Activated CD4-positive, alpha-beta T cell treated with anti-CD3 and anti-CD28 coated beads, Interleukin-2, amount 10 ng/mL, durations not matched to agents 7 days and 5 days (primary cell): ENCODE measurements at regions of chr6 and their contacts with region 1.

Region 1: GRCh38 chr6:109455502-109456282 is at the start of gene MICAL1:
- DNase-seq: peak; percentile 79
- H3K4me3 Mint-ChIP-seq: peak within 1 kb of the TSS; percentile 89
- H3K27ac Mint-ChIP-seq: peak within 1 kb of the TSS; percentile 95
- H3K4me1 Mint-ChIP-seq: peaks cover 71% of the 10 kb centered on the region
- H3K27me3 Mint-ChIP-seq: no peaks in the 10 kb centered on the region
- total RNA-seq, gene MICAL1: 93.1 to 98.3 TPM

Region 2: DNA sequence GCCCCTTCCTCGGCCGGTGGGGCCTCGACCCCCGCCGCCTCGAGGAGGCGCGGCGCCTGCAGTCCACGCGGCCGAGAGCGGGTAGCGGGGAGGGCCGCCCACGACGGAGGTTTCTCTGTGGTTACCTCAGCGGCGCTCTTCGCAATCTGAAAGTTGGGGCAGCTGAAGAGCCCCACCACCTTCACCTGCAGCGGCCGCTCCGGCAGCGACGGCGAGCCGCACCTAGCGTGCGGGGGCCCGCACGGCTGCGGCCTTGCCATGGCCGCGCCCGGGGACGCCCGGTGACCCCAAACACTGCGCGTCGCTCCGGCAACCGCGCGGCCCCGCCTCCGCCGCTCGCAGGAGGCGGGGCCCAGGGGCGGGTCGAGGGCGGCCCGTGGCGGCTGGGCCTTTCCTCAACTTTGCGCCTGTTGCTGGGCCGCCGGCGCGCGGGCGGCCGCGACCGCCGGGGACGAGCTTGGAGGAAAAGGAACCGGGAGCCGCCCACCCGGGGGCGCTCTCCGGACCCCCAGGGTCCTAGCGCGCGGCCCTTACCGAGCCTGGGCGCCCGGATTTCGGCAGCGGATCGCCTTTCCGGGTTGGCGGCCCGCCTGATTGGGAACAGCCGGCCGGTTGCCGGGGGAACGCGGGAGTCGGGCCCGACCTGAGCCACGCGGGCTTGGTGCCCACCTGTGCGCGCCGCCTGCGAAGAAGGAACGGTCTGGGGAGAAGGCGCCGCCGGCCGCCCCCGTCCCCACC is 15.2 kb before region 1 on chr6 and contains the starts of genes PPIL6 and SMPD2:
- CTCF ChIA-PET with region 1: interaction called, 81 read pairs
- POLR2A ChIA-PET with region 1: interaction called, 9 read pairs
- DNase-seq: peak; percentile 78
- H3K4me3 Mint-ChIP-seq: peak within 1 kb of the TSS; percentile 88
- H3K27ac Mint-ChIP-seq: peak within 1 kb of the TSS; percentile 89
- H3K4me1 Mint-ChIP-seq: peaks cover 27% of the 10 kb centered on the region
- H3K27me3 Mint-ChIP-seq: peaks cover 5% of the 10 kb centered on the region
- total RNA-seq, gene PPIL6: 0.17 to 0.22 TPM
- total RNA-seq, gene SMPD2: 13.0 to 14.0 TPM

Region 3: DNA sequence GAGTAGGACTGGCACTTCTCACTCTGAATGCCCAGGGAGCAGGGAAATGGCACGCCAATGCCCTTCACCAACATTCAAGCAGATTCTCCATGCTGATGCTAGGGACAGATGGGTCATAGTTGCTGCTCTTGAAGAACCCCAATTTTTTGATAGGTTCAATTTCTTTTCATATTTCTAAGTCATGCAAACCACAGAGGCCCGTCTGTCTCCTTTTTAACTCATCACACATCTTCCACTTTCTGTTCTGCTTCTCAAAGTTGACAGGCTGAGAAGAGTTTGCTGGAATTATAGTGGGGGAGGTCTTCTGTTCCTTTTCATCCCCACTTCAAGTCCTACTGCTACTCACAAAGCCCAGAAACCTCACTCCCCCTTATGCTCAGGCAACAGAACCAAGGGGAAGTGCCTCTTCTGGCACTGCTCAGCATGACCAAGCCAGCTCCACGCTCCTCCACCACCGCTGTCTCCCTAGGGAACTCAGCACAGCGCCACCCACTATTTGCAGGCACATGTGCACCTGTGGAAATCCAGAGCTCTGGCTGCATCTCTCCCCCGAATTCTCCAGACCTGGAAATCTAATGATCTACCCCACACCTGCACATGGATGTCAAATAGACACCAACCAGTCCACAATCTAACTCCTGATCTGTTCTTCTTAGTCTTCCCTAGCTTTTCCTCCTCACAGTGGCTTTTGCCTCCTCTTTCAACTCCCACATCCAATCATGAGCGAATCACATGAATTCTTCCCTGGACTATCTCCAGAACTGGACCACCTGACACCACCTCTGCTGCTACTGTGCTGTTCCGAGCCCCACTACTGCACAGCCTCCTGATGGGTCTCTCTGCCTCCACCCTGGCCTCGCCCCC is 16.7 kb after region 1 on chr6:
- CTCF ChIA-PET with region 1: interaction called, 11 read pairs
- POLR2A ChIA-PET with region 1: no interaction called
- DNase-seq: no peak
- H3K4me3 Mint-ChIP-seq: no peak overlapping the region
- H3K27ac Mint-ChIP-seq: peak overlapping the region; percentile 61
- H3K4me1 Mint-ChIP-seq: peaks cover 73% of the 10 kb centered on the region
- H3K27me3 Mint-ChIP-seq: no peaks in the 10 kb centered on the region